ENCODE measurements at regions of chr16 and their contacts with region 1.

Region 1: DNA sequence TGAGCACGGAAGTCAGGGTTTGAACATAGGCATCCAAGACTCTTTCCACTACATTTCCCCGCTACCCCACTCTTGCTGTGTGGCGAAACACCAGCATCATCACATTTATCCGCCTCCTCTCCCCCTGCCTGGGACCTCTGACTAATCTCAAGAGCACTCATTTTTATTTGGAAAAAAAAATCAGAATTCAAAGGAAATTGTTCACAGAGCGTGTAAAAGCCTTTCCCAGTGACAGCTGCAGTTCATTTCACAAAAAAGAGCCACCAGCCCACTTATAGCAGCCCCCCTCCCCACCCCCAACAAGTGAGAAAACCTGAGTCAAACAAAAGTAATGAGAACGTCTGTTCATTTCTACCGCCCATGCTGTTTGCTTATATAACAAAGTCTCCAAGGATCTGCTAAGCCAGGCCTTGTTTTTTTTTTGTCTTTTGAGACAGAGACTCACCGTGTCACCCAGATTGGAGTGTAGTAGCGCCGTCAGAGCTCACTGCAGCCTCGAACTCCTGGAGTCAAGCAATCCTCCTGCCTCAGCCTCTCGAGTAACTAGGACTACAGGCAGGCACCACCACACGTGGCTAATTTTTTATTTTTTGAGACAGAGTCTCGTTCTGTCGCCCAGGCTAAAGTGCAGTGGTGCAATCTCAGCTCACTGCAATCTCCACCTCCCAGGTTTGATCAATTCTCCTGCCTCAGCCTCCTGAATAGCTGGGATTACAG is 48.3 kb upstream of the HAPSTR1 start:
- DNase-seq: no peak
- H3K4me3 ChIP-seq: no peak overlapping the region
- H3K27ac ChIP-seq: no peak overlapping the region
- H3K4me1 ChIP-seq: peaks cover 2 to 10% (median 8%) of the 10 kb centered on the region in 4 donors
- H3K27me3 ChIP-seq: no peaks in the 10 kb centered on the region
- CTCF ChIP-seq: no peak
- EP300 ChIP-seq: no peak
- POLR2A ChIP-seq: no peak

Region 2: DNA sequence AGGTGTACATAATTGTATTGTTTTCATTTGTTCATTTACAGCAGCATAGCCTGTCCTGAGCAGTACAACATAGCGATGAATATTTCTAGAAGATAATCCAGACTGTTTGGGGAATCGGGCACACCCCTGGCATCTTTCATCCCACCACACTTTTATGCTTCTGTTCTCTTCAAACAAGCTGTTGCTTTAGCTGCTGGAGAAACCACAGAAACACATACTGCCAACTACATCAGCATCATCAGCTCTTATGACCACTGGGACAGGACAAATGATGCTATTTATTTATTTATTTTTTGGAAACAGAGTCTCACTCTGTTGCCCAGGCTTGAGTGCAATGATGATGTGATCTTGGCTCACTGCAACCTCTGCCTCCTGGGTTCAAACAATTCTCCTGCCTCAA is 25.8 kb after region 1 on chr16:
- in situ Hi-C with region 1: no loop called
- intact Hi-C with region 1: no loop called
- DNase-seq: no peak
- H3K4me3 ChIP-seq: no peak overlapping the region
- H3K27ac ChIP-seq: no peak overlapping the region
- H3K4me1 ChIP-seq: no peaks in the 10 kb centered on the region
- H3K27me3 ChIP-seq: no peaks in the 10 kb centered on the region
- CTCF ChIP-seq: no peak
- EP300 ChIP-seq: no peak
- POLR2A ChIP-seq: no peak

Region 3: GRCh38 chr16:9079430-9079812 is 36.3 kb after region 1 on chr16:
- in situ Hi-C with region 1: no loop called
- intact Hi-C with region 1: loop called (anchors 1 kb)
- DNase-seq: no peak
- H3K4me3 ChIP-seq: no peak overlapping the region
- H3K27ac ChIP-seq: no peak overlapping the region
- H3K4me1 ChIP-seq: no peaks in the 10 kb centered on the region
- H3K27me3 ChIP-seq: no peaks in the 10 kb centered on the region
- CTCF ChIP-seq: no peak
- EP300 ChIP-seq: no peak
- POLR2A ChIP-seq: no peak